ENCODE measurements at regions of chr3 and their contacts with region 1.

Region 1: DNA sequence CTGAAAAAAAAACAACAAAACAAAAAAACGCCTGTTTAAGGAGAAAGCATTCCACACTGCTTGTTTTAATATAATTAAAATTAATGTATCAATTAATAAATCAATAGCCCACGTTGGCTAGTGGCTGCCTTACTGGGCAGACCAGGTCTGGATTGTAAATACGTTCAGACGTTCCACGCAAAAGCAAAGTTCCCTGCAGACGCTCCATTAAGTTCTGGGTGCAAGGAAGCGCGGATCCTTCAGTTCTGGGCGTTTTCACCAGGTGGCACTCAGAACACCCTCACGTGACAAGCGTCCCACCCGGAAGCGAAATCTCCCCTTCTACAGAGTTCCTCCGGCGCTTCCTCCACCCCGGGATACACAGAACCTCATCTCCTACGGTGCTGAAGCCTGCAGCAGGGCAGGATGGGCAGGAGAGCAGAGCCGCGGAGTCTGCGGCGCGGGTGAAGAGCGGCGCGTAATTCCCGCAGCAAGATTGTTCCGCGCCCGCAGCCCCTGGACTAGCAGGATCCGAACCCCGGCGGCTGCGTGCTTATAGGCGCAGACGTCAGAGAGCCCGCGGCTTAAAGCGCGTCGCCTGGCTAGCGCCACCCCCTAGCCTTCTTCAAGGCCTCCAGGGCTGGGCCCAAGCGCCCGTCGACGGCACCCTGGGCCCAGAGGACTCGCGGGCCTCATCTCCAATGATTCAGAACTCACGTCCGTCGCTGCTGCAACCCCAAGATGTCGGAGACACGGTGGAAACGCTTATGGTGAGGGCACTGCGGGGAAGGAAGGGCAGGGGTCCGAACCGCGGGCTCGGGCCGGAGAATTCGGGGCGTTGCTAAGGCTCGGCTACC is at the start of gene SLC25A38:
- DNase-seq: peak; percentile 67 to 89 (median 82)
- ATAC-seq: peak; percentile 79 to 85
- H3K4me3 Mint-ChIP-seq: peak within 1 kb of the TSS; percentile 96 to 100 (median 99)
- H3K27ac Mint-ChIP-seq: peak within 1 kb of the TSS; percentile 98 to 100 (median 99)
- H3K4me1 Mint-ChIP-seq: peaks cover 27 to 57% (median 49%) of the 10 kb centered on the region in 4 donors
- H3K27me3 Mint-ChIP-seq: no peaks in the 10 kb centered on the region
- polyA plus RNA-seq, gene SLC25A38: 34.2 to 53.4 (median 43.2) TPM

Region 2: GRCh38 chr3:39267631-39268548 is 115.4 kb before region 1 on chr3:
- POLR2A ChIA-PET with region 1: no interaction called
- DNase-seq: peak in 9 of 10 donors; percentile 7 to 66 (median 43)
- ATAC-seq: peak; percentile 95
- H3K4me3 Mint-ChIP-seq: peak overlapping the region in 7 of 10 donors; percentile 13 to 77 (median 50)
- H3K27ac Mint-ChIP-seq: peak overlapping the region in 9 of 10 donors; percentile 49 to 96 (median 81)
- H3K4me1 Mint-ChIP-seq: peaks cover 8 to 86% (median 20%) of the 10 kb centered on the region in 4 donors
- H3K27me3 Mint-ChIP-seq: peaks cover 0 to 16% (median 5%) of the 10 kb centered on the region in 5 donors

Region 3: DNA sequence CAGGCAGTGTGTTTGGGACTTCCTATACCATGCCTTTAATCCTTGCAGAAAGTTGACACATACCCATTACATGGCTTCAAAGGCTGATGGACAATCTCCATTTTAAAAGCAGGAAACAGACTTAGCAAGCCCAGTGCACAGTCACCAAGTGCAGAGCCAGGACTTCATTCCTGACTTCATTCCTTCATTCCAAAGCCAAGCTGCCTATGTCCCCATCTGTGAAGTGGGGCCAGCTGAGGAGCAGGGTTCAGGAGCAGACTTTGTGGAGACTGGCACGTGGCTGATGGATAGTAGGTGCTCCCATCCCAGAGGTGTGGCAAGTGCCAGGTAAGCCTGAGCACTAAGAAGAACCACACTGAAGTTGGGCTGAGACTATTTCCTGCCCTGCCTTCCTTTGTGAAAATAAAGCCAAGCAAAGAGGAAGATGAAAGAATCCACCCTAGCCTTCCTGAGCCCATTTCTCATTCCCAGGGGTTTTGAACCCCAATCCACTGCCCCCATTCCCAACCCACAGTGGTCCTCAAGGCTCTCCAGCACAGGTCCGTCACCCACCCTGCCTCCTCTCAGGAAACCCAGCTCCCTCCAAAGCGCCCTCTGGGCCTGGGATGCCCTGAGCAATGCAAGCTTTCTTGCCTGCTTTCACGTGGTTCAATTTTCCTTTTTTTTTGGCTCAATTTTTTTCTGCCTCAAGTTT is 105.2 kb before region 1 on chr3:
- POLR2A ChIA-PET with region 1: no interaction called
- DNase-seq: no peak
- ATAC-seq: no peak
- H3K4me3 Mint-ChIP-seq: peak overlapping the region in 5 of 10 donors; percentile 29 to 93 (median 59)
- H3K27ac Mint-ChIP-seq: peak overlapping the region in 1 of 10 donors; percentile 91
- H3K4me1 Mint-ChIP-seq: peaks cover 5 to 47% (median 6%) of the 10 kb centered on the region in 4 donors
- H3K27me3 Mint-ChIP-seq: peaks cover 0 to 17% (median 2%) of the 10 kb centered on the region in 5 donors

Region 4: DNA sequence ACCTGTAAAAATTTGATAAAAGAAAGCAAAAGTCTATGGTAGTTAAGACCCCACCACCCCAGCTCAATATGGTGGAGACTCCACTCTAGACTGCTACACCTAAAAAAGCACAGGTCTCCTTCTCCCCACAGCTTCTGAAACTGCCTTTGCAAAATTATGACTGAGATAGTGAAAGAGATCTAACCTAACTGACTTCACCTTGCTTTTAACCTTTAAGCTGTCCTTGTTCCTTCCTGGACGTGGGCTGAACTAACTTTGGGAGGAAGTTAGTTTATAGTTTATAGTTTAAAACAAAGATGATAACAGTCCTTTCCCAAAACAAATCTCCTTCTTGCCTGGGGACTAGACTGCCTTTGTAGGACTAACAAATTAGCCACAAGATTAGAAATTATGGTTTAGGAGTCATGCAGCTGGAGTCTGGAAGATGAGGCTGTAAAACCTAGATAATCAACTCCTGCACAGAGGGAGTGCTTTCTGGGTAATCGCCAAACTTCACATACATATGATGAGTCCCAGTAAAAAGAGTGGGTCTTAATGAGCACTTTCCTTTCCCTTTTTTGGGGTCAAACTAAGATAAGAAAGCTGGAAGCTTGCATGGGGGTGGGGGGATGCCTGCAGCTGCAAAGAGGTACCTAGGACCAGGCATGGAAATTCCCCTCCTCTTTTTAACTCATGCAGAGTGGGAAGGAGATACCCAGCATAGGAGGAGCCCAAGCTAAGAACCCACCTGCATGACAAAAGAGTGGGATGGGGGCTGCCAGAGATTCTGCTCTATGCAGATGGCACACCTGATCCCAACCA is 36.3 kb before region 1 on chr3:
- POLR2A ChIA-PET with region 1: no interaction called
- DNase-seq: no peak
- ATAC-seq: no peak
- H3K4me3 Mint-ChIP-seq: peak overlapping the region in 5 of 10 donors; percentile 0 to 49 (median 12)
- H3K27ac Mint-ChIP-seq: peak overlapping the region in 6 of 10 donors; percentile 1 to 57 (median 30)
- H3K4me1 Mint-ChIP-seq: peaks cover 8 to 53% (median 31%) of the 10 kb centered on the region in 4 donors
- H3K27me3 Mint-ChIP-seq: no peaks in the 10 kb centered on the region

Region 5: GRCh38 chr3:39406368-39407258 is 23.4 kb after region 1 on chr3 and contains the start of gene RPSA:
- POLR2A ChIA-PET with region 1: interaction called, 67 read pairs
- DNase-seq: peak; percentile 82 to 99 (median 96)
- ATAC-seq: peak; percentile 93
- H3K4me3 Mint-ChIP-seq: peak within 1 kb of the TSS; percentile 87 to 98 (median 92)
- H3K27ac Mint-ChIP-seq: peak within 1 kb of the TSS; percentile 88 to 99 (median 96)
- H3K4me1 Mint-ChIP-seq: peaks cover 23 to 54% (median 47%) of the 10 kb centered on the region in 4 donors
- H3K27me3 Mint-ChIP-seq: peaks cover 0 to 3% (median 0%) of the 10 kb centered on the region in 5 donors
- polyA plus RNA-seq, gene RPSA: 1,242 to 1,388 (median 1,323) TPM

Measured in naive thymus-derived CD8-positive, alpha-beta T cell (primary cell).